H1 (cell line): ENCODE measurements at regions of chr16 and their contacts with region 1.

Region 1: GRCh38 chr16:89115216-89115861 is 21.7 kb downstream of the ACSF3 start:
- DNase-seq: no peak
- H3K4me3 ChIP-seq: no peak overlapping the region
- H3K27ac ChIP-seq: 0 out of 2 replicates have a peak overlapping the region, but pooled peaks have one; percentile 3
- H3K4me1 ChIP-seq: peaks cover 0 to 10% (median 3%) of the 10 kb centered on the region in 4 experiments; a peak in 2 of 7 replicates
- H3K27me3 ChIP-seq: no peaks in the 10 kb centered on the region
- CTCF ChIP-seq: no peak
- EP300 ChIP-seq: no peak
- POLR2A ChIP-seq: no peak
- RAD21 ChIP-seq: no peak

Region 2: DNA sequence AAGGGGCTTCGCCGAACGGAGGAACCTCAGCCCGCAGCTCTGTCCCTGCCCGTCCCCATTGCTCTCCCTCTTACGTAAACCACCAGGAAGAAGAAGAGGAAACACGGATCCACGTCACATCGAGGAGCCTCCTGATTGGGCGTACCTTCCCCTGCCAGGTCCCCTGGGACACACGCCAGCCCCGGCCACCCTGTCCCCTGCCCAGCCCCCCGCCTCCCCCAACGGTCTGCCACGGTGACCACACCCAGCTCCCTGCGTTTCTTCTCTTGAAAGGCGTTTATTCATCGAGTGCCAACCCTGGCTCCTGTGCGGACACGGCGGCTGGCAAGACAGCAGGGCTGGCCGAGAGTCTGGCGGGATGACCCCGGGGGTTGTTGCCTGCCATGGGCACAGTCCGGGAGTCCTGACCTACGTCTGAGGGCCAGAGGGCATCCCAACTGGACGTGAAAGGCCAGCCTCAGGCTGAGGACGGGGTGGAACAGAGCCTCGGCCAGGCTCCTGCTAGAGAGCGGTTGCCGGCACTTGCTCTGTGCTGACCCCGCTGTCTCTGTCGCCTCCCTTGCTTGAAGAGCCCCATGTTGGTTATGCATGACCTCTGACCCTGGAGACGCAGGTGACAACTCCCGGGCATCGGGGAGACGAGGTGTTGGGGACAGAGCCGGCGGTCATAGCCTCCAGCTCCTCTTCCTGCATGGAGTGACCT is 62.3 kb before region 1 on chr16:
- CTCF ChIA-PET with region 1: no interaction called
- POLR2A ChIA-PET with region 1: no interaction called
- DNase-seq: no peak
- H3K4me3 ChIP-seq: no peak overlapping the region
- H3K27ac ChIP-seq: no peak overlapping the region
- H3K4me1 ChIP-seq: peaks cover 0 to 6% (median 2%) of the 10 kb centered on the region in 4 experiments; a peak in 3 of 7 replicates
- H3K27me3 ChIP-seq: no peaks in the 10 kb centered on the region
- CTCF ChIP-seq: no peak
- EP300 ChIP-seq: no peak
- POLR2A ChIP-seq: no peak
- RAD21 ChIP-seq: no peak

Region 3: DNA sequence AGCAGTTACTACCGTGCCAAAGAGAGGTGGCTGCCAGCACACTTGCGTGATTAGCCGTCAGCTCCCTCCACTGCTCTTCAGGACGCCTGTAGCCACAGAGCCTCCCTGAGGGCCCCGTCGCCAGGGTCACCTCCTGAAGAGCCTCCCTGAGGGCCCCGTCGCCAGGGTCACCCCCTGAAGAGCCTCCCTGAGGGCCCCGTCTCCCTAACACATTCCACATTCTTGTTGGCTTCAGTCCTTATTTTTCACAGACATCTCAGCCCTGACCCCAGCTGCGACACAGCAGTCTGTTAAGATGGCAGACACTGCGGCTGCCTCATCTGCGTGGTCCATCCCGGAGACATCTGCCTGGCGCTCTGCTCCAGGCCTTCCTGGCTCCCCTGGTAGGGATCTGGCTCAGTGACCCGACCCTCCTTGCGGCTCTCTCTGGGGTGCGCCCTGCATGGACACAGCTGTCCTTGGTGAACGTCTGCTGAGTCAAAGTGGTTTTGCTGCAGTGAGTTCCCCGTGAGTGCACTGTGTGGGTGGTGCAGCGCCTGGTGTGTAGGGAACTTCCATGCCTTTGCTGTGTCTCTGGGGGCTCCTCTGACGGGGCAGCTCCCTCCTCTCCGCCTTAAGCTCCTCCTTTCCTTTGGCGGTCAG is 10.3 kb before region 1 on chr16:
- CTCF ChIA-PET with region 1: interaction called, 3 read pairs
- POLR2A ChIA-PET with region 1: interaction called, 12 read pairs
- DNase-seq: no peak
- H3K4me3 ChIP-seq: no peak overlapping the region
- H3K27ac ChIP-seq: no peak overlapping the region
- H3K4me1 ChIP-seq: no peaks in the 10 kb centered on the region
- H3K27me3 ChIP-seq: no peaks in the 10 kb centered on the region
- CTCF ChIP-seq: no peak
- EP300 ChIP-seq: no peak
- POLR2A ChIP-seq: no peak
- RAD21 ChIP-seq: no peak

Region 4: DNA sequence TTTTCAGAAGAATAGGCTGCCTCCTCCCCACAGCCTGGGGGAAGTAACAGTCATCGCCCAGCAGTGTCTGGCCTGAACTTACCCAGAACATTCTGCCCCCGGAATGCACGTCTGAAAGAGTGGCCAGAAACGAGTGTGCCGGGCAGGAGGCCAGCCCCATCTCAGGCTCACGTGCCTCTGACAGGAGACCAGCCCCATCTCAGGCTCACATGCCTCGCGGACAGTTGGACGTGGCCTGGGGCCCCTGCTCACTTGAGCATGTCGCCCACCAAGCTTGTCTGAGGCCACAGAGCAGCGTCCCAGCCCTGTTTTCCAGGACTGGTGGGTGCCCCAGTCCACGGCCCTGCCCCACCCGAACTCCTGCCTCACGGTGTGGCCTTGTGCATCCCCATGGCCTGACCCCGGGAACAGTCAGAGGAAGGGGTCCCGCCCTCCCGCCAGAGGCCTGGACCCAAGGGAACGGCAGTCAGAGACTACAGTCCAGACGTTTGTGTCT is 39.9 kb after region 1 on chr16:
- CTCF ChIA-PET with region 1: no interaction called
- POLR2A ChIA-PET with region 1: no interaction called
- DNase-seq: no peak
- H3K4me3 ChIP-seq: no peak overlapping the region
- H3K27ac ChIP-seq: no peak overlapping the region
- H3K4me1 ChIP-seq: no peaks in the 10 kb centered on the region
- H3K27me3 ChIP-seq: peaks cover 0 to 6% (median 1%) of the 10 kb centered on the region in 4 experiments; a peak in 2 of 7 replicates
- CTCF ChIP-seq: no peak
- EP300 ChIP-seq: no peak
- POLR2A ChIP-seq: no peak
- RAD21 ChIP-seq: no peak

Region 5: GRCh38 chr16:89246903-89247733 is 131.8 kb after region 1 on chr16:
- CTCF ChIA-PET with region 1: no interaction called
- POLR2A ChIA-PET with region 1: no interaction called
- DNase-seq: peak; percentile 62 to 100
- H3K4me3 ChIP-seq: peak overlapping the region; percentile 33 to 72 (median 44)
- H3K27ac ChIP-seq: no peak overlapping the region
- H3K4me1 ChIP-seq: peaks cover 0 to 9% (median 0%) of the 10 kb centered on the region in 4 experiments; a peak in 2 of 7 replicates
- H3K27me3 ChIP-seq: peaks cover 0 to 11% (median 6%) of the 10 kb centered on the region in 4 experiments; a peak in 4 of 7 replicates
- CTCF ChIP-seq: no peak
- EP300 ChIP-seq: no peak
- POLR2A ChIP-seq: peak in 1 of 2 experiments; percentile 22; a peak in 1 of 3 replicates
- RAD21 ChIP-seq: no peak